ENCODE measurements at regions of chr5 and their contacts with region 1.

Region 1: DNA sequence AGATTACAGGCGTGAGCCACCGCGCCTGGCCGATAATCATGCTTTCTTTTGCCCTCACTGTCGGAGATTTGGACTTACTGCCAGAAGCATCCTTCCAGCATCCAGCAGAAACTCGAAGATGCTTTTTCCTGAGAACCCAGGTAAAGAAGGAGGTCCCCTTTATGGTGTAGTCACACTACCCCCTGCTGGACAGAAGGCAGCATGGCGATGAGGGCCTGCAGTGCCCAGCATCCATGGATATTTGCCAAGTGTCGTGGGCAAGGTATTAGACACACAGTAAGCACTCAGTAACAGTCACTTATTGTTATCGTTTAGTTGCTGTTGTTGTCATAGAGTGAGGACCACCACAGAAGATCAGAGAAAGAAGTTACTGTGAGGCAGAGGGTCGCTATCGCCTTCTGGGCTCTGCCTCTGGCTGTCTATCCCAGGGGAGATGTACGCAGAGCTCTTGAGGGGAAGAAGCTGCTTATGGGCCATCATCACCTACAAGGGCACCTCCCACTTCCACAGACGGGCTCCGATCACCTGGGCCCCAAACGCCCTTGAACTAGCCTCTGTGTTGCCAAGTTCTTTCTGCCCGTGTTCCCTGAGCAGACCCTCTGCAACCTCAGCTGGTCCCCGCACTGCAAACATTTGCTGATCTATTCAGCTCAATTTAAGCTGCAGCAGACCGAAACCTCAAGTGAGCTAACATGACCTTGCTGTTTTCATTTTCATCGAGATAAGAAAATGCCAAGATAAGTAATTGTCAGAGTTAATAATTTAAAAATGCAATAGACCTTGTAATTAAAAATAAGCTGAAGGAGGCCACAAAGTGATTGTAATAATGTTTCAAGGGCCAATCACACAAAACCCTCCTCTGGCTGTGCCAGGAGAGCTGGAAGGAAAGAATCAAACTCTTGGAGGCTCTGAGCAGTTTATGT is 23.9 kb downstream of the C5orf15 start:
- DNase-seq: peak; percentile 80
- H3K4me3 Mint-ChIP-seq: no peak overlapping the region
- H3K27ac Mint-ChIP-seq: no peak overlapping the region
- H3K4me1 Mint-ChIP-seq: peaks cover 8% of the 10 kb centered on the region
- H3K27me3 Mint-ChIP-seq: peaks cover 2% of the 10 kb centered on the region

Region 2: GRCh38 chr5:133423618-133424282 is 520.8 kb before region 1 on chr5:
- intact Hi-C with region 1: loop called (anchors 1 kb)
- DNase-seq: peak; percentile 91
- H3K4me3 Mint-ChIP-seq: no peak overlapping the region
- H3K27ac Mint-ChIP-seq: no peak overlapping the region
- H3K4me1 Mint-ChIP-seq: peaks cover 5% of the 10 kb centered on the region
- H3K27me3 Mint-ChIP-seq: peaks cover 15% of the 10 kb centered on the region

Region 3: DNA sequence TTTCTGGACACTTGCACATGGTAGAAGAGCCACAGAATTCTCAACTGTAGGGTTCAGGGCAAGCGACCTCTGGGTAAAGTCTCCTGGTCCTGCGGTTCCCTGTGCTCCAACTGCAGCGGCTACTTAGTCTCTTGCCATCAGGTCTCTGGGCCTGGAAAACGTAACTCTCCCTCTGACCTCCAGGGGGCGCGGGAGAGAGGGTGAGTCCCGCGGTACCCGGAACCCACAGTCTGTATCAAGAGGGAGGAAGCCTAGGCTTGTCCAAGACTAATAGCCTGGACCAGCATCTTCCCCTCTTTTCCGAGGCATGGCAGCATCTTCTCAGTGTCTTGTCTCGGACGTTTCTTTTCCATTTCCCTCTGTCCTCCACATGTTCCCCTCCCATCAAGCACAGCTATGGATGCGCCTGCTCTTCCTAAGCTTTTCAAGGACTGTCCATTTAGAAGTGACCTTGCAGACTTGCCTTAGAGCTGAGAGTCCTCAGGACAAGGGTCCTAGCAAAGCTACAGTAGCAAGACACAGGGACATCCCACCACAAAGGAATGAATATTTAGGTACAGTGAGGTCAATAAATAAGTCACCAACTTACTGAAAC is 391.5 kb before region 1 on chr5:
- intact Hi-C with region 1: loop called (anchors 1 kb)
- DNase-seq: peak; percentile 87
- H3K4me3 Mint-ChIP-seq: no peak overlapping the region
- H3K27ac Mint-ChIP-seq: no peak overlapping the region
- H3K4me1 Mint-ChIP-seq: peaks cover 3% of the 10 kb centered on the region
- H3K27me3 Mint-ChIP-seq: peaks cover 26% of the 10 kb centered on the region

Region 4: GRCh38 chr5:133754575-133755169 is 189.9 kb before region 1 on chr5:
- intact Hi-C with region 1: loop called (anchors 1 kb)
- DNase-seq: peak; percentile 70
- H3K4me3 Mint-ChIP-seq: no peak overlapping the region
- H3K27ac Mint-ChIP-seq: no peak overlapping the region
- H3K4me1 Mint-ChIP-seq: no peaks in the 10 kb centered on the region
- H3K27me3 Mint-ChIP-seq: peaks cover 25% of the 10 kb centered on the region